ENCODE measurements at regions of chr7 and their contacts with region 1.

Region 1: DNA sequence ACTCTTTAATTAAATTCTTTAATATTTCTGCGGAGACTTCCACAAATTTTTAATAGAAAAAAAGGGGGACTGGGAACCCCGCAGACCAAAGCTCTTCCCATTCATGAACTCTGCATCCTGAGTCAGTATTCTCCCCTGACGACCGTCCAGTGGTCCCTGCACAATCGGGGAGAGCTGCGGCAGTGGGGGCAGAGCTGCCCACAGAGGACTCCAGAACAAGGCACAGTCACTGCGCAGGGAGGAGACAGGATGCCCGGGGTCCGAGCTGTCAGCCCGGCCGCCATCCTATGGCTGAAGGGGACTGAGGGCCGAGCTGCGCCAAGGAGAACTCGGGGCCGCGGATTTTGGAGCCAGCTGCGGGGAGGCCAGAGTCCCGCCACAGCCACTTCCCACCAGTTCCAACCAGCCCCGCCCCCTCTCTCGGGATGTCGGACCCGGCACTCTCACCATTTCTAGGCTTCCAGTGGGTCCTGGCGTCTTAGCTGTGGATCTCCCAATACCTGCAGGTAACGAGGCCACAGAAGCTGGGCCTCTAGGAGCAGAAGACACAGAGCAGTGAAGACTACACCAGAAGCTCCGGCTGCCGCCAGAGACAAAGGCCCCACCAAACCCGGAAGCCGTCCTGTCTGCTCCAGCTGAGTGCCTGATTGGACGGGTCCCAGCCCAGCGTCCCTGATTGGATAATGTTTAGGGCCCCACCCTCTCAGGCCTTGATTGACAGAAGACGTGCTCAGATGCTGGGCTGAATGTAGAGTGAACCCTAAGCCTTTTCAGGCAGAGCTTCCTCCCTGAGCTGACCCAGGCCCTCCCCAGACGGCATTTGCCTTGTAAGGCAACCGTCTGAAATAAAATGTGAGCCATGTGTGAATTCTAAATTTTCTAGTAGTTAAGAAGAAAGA is at the start of gene ERV3-1:
- DNase-seq: peak; percentile 90
- ATAC-seq: peak; percentile 99
- H3K4me3 ChIP-seq: peak within 1 kb of the TSS; percentile 94
- H3K27ac ChIP-seq: peak within 1 kb of the TSS; percentile 88
- H3K4me1 ChIP-seq: no peaks in the 10 kb centered on the region
- H3K27me3 ChIP-seq: no peaks in the 10 kb centered on the region
- CTCF ChIP-seq: no peak
- EP300 ChIP-seq: no peak
- POLR2A ChIP-seq: peak; percentile 95
- RAD21 ChIP-seq: no peak
- polyA plus RNA-seq, gene ERV3-1: 9.4 to 11.7 TPM

Region 2: GRCh38 chr7:64794171-64794844 is 212.0 kb before region 1 on chr7 and contains the start of gene ZNF138:
- CTCF ChIA-PET with region 1: no interaction called
- POLR2A ChIA-PET with region 1: interaction called, 7 read pairs
- RAD21 ChIA-PET with region 1: no interaction called
- SMC1A ChIA-PET with region 1: no interaction called
- in situ Hi-C with region 1: no loop called
- intact Hi-C with region 1: loop called (anchors 10 kb)
- DNase-seq: peak; percentile 84
- ATAC-seq: peak; percentile 100
- H3K4me3 ChIP-seq: peak within 1 kb of the TSS; percentile 88
- H3K27ac ChIP-seq: peak within 1 kb of the TSS; percentile 92
- H3K4me1 ChIP-seq: no peaks in the 10 kb centered on the region
- H3K27me3 ChIP-seq: no peaks in the 10 kb centered on the region
- CTCF ChIP-seq: no peak
- EP300 ChIP-seq: no peak
- POLR2A ChIP-seq: peak; percentile 90
- RAD21 ChIP-seq: no peak
- polyA plus RNA-seq, gene ZNF138: 8.6 to 11.0 TPM

Region 3: DNA sequence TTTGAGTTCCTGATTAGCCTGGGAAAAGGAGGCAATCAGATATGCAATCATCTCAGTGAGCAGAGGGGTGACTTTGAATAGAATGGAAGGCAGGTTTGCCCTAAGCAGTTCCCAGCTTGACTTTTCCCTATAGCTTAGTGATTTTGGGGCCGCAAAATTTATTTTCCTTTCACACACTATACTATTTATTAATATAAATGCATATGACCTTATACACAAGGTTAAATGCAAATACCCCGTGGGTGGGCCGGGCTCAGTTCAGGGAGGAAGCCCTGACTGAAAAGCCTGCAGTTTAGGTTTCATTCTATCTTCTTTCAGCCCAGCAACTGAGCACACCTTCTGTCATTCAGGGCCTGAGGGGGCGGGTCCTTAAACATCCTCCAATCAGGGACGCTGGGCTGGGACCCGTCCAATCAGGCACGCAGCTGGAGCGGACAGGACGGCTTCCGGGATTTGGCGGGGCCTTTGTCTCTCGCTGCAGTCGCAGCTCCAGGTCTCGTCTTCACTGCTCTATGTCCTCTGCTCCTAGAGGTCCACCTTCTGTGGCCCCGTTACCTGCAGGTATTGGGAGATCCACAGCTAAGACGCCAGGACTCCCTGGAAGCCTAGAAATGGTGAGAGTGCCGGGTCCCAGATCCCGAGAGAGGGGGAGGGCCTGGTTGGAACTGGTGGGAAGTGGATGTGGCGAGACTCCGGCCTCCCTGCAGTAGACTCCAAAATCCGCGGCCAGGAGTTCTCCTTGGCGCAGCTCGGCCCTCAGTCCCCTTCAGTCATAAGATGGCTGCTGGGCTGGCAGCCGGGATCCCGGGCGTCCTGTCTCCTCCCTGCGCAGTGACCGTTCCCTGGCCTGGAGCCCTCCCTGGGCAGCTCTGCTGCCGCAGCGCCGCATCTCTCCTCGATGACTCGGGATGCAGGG is 103.3 kb before region 1 on chr7 and contains the start of gene ZNF273:
- CTCF ChIA-PET with region 1: no interaction called
- POLR2A ChIA-PET with region 1: interaction called, 4 read pairs
- RAD21 ChIA-PET with region 1: no interaction called
- SMC1A ChIA-PET with region 1: interaction called, 5 read pairs
- in situ Hi-C with region 1: no loop called
- intact Hi-C with region 1: loop called (anchors 5 kb)
- DNase-seq: peak; percentile 71
- ATAC-seq: peak; percentile 96
- H3K4me3 ChIP-seq: peak within 1 kb of the TSS; percentile 69
- H3K27ac ChIP-seq: peak within 1 kb of the TSS; percentile 94
- H3K4me1 ChIP-seq: no peaks in the 10 kb centered on the region
- H3K27me3 ChIP-seq: no peaks in the 10 kb centered on the region
- CTCF ChIP-seq: no peak
- EP300 ChIP-seq: no peak
- POLR2A ChIP-seq: peak; percentile 87
- RAD21 ChIP-seq: no peak
- polyA plus RNA-seq, gene ZNF273: 5.1 to 10.3 TPM

Region 4: GRCh38 chr7:64951250-64951848 is 55.0 kb before region 1 on chr7:
- CTCF ChIA-PET with region 1: interaction called, 7 read pairs
- POLR2A ChIA-PET with region 1: no interaction called
- RAD21 ChIA-PET with region 1: interaction called, 10 read pairs
- SMC1A ChIA-PET with region 1: interaction called, 5 read pairs
- in situ Hi-C with region 1: no loop called
- intact Hi-C with region 1: no loop called
- DNase-seq: peak; percentile 16
- ATAC-seq: peak; percentile 79
- H3K4me3 ChIP-seq: no peak overlapping the region
- H3K27ac ChIP-seq: no peak overlapping the region
- H3K4me1 ChIP-seq: no peaks in the 10 kb centered on the region
- H3K27me3 ChIP-seq: no peaks in the 10 kb centered on the region; a peak in 1 of 4 replicates
- CTCF ChIP-seq: peak; percentile 69 to 82 (median 69); a peak in 5 of 6 replicates
- EP300 ChIP-seq: no peak
- POLR2A ChIP-seq: no peak
- RAD21 ChIP-seq: peak; percentile 83

Region 5: DNA sequence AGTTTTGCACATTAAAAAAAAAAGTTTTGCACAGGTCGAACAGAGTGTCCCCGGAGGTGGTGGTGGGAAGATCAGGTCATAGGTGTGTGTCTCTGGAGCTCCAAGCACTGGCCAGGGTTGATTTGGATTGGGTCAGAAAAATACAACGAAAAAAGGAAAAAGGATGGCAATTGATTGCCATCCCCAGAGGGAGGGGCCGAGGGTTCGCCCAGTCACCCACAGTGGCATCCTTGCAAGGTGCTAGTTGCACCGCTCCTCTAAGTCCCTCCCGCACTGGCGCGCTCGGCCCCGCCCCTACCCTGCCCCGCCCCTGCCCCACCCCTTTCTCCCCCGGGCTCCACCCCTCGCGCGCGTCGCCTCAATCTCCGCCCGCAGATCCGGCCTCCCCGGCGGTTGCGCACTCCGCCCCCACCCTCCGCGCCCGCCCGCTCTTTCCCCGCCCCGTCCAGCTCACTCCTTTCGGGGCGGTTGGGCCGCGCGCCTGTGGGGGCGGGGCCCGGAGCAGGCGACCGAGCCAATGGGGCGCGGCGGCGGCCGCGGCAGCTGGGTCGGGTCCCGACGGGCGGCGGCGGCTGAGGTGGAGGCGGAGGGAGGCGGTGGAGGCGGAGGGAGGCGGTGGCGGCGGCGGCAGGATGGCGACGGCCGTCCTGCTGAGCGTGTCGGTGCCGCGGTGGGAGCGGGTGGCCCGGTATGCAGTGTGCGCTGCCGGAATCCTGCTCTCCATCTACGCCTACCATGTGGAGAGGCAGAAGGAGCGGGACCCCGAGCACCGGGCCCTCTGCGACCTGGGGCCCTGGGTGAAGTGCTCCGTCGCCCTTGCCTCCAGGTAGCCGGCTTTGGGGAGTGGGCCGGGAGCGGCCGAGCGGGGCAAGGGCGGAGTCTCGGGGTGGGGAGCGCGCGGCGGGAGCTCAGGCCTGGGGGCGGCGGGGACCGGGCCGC is 31.7 kb after region 1 on chr7:
- CTCF ChIA-PET with region 1: interaction called, 3 read pairs
- POLR2A ChIA-PET with region 1: interaction called, 16 read pairs
- RAD21 ChIA-PET with region 1: interaction called, 7 read pairs
- SMC1A ChIA-PET with region 1: interaction called, 8 read pairs
- in situ Hi-C with region 1: no loop called
- intact Hi-C with region 1: loop called (anchors 5 kb)
- DNase-seq: peak; percentile 57
- ATAC-seq: peak; percentile 91
- H3K4me3 ChIP-seq: peak overlapping the region; percentile 68; the same call in 1 of the 2 replicates
- H3K27ac ChIP-seq: peak overlapping the region; percentile 67
- H3K4me1 ChIP-seq: no peaks in the 10 kb centered on the region
- H3K27me3 ChIP-seq: no peaks in the 10 kb centered on the region
- CTCF ChIP-seq: peak in 1 of 3 experiments; percentile 30; a peak in 1 of 6 replicates
- EP300 ChIP-seq: no peak
- POLR2A ChIP-seq: peak; percentile 84
- RAD21 ChIP-seq: no peak